ENCODE measurements at regions of chr1 and their contacts with region 1.

Region 1: DNA sequence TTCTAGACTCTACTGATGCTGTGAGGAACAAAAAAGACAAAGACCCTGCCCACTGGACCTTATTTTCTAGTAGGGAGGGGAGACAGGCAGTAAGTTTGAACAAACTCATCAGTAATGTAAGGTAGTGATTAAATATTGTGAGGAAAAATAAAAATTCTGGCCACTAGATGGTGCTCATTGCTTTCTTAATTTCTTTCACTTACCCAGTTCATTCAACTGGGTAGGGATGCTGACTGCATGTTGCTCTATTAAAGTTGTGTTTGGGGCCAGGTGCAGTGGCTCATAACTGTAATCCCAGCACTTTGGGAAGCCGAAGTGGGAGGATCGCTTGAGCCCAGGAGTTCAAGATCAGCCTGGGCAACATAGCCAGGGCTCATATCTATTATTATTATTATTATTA is 6.3 kb upstream of the KYAT3 start:
- DNase-seq: no peak
- ATAC-seq: peak; percentile 87

Region 2: DNA sequence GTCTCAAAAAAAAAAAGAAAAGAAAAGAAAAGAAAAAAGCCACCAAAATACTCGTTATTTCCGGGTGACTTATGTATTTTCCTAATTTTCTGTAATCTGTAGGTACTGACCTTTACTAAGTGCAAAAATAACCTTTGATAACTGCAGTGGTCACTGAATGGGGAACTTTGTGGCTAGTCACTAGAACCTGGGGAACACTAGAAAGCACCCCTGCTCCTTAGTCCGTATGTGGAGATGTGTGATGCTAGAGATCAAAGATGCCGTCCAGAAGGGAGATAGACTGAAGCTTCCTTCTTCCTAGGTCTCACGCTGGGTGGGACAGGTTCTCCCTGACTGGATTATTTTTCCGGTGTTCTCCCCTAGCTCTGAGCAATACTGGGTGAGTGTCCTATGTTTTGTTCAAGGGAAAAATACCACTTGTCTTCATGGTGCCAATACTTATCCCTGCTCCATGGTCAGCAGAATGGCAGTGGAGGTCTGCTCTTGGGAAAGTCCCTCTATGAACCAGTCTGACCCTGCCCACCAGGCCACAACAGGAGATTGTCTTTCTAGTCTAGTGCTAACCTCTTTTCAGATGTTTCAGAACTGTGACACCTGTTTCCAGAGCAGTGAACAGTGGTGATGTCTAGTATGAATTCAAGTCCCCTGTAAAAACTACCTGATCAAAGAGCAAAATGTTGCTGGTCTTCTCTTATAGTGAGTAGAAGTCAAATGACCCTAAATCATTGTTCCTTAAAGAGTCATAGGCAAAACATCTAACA is 147.2 kb before region 1 on chr1:
- intact Hi-C with region 1: no loop called
- DNase-seq: no peak
- ATAC-seq: no peak

Region 3: GRCh38 chr1:89065079-89065868 is 66.6 kb after region 1 on chr1 and contains the start of gene GBP1:
- intact Hi-C with region 1: no loop called
- DNase-seq: no peak
- ATAC-seq: peak; percentile 86
- total RNA-seq, gene GBP1: 13.0 to 21.2 TPM

Region 4: GRCh38 chr1:89358287-89358893 is 359.7 kb after region 1 on chr1:
- intact Hi-C with region 1: loop called in 1 of 2 experiments (anchors 5 kb)
- DNase-seq: peak; percentile 63 to 90
- ATAC-seq: peak; percentile 87

Region 5: DNA sequence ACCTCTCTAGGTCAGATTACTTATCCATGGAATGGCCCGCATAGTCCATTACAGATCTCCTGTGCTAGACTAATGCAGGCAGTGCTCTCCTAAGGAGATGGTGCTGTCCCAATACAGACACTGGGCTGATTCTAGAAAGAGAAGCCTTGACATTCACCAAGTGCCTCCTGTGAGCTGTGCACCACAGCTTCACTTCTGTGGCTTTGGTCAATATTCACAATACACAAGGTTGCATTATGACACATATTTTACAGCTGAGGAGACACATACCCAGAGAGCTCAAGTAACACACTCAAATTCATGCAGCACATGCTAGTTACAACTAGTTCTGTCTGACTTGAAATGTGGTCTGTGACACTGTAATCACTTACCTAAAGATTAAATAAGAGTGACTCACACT is 466.5 kb after region 1 on chr1:
- intact Hi-C with region 1: loop called in 1 of 2 experiments (anchors 10 kb)
- DNase-seq: no peak
- ATAC-seq: no peak

Measured in left colon (tissue), 2 donors.